OCI-LY7 (cell line): ENCODE measurements at regions of chr12 and their contacts with region 1.

Region 1: DNA sequence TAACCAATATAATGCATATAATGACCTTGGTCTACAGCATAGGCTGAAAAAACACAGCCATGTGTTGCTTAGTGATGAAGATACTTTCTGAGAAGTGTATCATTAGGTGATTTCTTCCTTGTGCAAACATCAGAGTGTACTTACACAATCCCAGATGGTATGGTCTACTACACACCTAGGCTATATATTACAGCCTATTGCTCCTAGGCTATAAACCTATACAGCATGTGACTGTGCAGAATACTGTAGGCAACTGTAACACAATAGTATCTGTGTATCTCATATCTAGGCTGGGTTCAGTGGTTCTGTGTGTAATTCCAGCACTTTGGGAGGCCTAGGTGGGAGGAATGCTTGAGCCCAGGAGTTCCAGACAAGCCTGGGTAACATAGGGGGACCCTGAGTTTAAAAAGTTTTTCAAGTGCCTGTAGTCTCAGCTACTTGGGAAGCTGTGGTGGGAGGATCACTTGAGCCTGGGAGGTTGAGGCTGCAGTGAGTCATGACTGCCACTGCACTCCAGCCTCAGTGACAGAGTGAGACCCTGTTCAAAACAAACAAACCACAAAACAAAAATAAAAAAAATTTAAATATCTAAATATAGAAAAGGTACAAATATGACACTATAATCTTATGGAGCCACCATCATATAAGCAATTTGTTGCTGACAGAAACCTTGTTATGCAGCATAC is 66.6 kb downstream of the GRIP1 start:
- DNase-seq: no peak
- H3K4me3 ChIP-seq: no peak overlapping the region
- H3K27ac ChIP-seq: no peak overlapping the region
- H3K4me1 ChIP-seq: peaks cover 57% of the 10 kb centered on the region
- CTCF ChIP-seq: no peak

Region 2: DNA sequence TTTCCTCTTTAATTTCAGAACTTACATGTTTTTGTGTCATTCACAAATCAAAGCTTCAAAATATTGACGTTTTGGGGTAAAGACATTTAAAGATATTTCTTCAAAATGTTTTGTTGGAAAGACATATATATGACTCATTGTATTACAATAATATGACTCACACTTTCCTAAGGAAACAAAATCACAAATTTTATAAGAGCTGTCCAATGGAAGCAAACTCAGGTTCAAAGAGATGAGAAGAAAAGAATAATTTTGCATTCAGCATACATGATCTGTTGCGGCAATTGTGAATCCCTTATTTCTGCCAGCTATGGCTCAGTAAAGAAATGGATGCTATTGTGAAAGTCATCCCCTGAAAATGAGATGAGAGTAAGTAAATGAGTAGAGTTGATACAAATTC is 16.0 kb before region 1 on chr12:
- CTCF ChIA-PET with region 1: interaction called, 3 read pairs
- POLR2A ChIA-PET with region 1: interaction called, 27 read pairs
- intact Hi-C with region 1: loop called (anchors 1 kb)
- DNase-seq: no peak
- H3K4me3 ChIP-seq: no peak overlapping the region
- H3K27ac ChIP-seq: no peak overlapping the region
- H3K4me1 ChIP-seq: peaks cover 45% of the 10 kb centered on the region
- CTCF ChIP-seq: no peak